K562 (cell line): ENCODE measurements at regions of chr15 and their contacts with region 1.

Region 1: GRCh38 chr15:20645956-20646355 is 104.4 kb upstream of the GOLGA6L6 start:
- DNase-seq: no peak
- ATAC-seq: peak; percentile 39
- H3K4me3 ChIP-seq: no peak overlapping the region
- H3K27ac ChIP-seq: no peak overlapping the region
- H3K4me1 ChIP-seq: no peaks in the 10 kb centered on the region
- H3K27me3 ChIP-seq: peaks cover 0 to 4% of the 10 kb centered on the region in 2 experiments; a peak in 1 of 5 replicates
- CTCF ChIP-seq: no peak
- EP300 ChIP-seq: no peak
- POLR2A ChIP-seq: no peak
- RAD21 ChIP-seq: no peak

Region 2: GRCh38 chr15:20344601-20345400 is 301.2 kb before region 1 on chr15:
- CTCF ChIA-PET with region 1: no interaction called
- POLR2A ChIA-PET with region 1: no interaction called
- in situ Hi-C with region 1: no loop called
- intact Hi-C with region 1: no loop called
- DNase-seq: peak in 3 of 4 experiments; percentile 8 to 15 (median 13)
- ATAC-seq: no peak
- H3K4me3 ChIP-seq: no peak overlapping the region
- H3K27ac ChIP-seq: no peak overlapping the region
- H3K4me1 ChIP-seq: peaks cover 0 to 35% of the 10 kb centered on the region in 2 experiments; a peak in 2 of 5 replicates
- H3K27me3 ChIP-seq: peaks cover 0 to 20% of the 10 kb centered on the region in 2 experiments; a peak in 1 of 5 replicates
- CTCF ChIP-seq: no peak
- EP300 ChIP-seq: no peak
- POLR2A ChIP-seq: no peak
- RAD21 ChIP-seq: no peak

Region 3: GRCh38 chr15:20659265-20659664 is 13.3 kb after region 1 on chr15:
- CTCF ChIA-PET with region 1: no interaction called
- POLR2A ChIA-PET with region 1: interaction called, 3 read pairs
- in situ Hi-C with region 1: no loop called
- intact Hi-C with region 1: loop called (anchors 1 kb)
- DNase-seq: no peak
- ATAC-seq: peak; percentile 71
- H3K4me3 ChIP-seq: no peak overlapping the region
- H3K27ac ChIP-seq: no peak overlapping the region
- H3K4me1 ChIP-seq: no peaks in the 10 kb centered on the region
- H3K27me3 ChIP-seq: no peaks in the 10 kb centered on the region
- CTCF ChIP-seq: no peak
- EP300 ChIP-seq: no peak
- POLR2A ChIP-seq: no peak
- RAD21 ChIP-seq: no peak